Activated naive CD4-positive, alpha-beta T cell treated with anti-CD3 and anti-CD28 coated beads, Interleukin-2, amount 10 ng/mL, durations not matched to agents 7 days and 5 days (primary cell): ENCODE measurements at regions of chr5 and their contacts with region 1.

Region 1: DNA sequence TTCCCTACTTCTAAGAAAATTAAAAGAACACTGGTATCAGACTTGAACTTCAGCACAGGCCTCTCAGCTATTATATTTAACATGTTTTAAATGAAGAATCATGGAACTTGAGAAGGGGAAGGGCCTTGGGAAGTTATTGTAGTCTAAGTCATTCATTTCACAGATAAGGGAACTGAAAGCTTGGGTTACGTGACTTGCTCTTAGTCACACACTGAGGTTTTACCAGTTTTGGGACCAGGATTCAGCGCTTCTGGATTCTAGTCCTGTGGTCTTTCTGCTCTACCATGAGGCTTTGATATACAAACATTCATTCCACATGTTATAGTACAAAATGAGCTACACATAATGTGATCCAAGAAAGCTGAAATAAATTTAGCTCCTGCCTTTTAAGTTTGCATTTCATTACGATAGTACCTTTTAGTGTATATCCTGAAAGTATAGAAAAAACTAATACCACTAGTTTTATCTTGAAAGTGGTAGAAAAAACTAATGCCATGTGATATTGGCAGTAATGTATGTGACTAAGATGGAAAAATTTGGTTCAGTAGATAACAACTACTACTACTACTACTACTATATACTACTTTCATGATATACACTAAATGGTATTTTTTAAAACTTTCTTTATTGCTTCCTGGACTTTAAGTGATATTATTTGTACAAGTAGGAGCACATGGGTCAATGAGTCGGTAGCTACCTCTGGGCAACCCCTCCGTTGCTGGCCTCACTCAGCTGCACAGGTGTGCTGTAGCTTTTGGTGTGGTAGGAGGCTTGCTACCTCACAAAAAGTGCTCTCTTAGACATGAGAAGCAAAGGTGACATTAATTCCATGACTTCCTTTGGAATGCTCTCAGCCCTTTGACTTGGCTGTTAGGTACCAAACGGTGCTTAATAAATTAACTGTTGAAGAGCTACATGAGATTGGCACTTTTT is 40.7 kb downstream of the F2RL2 start:
- DNase-seq: no peak
- H3K4me3 Mint-ChIP-seq: no peak overlapping the region
- H3K27ac Mint-ChIP-seq: peak overlapping the region; percentile 7
- H3K4me1 Mint-ChIP-seq: peaks cover 14% of the 10 kb centered on the region
- H3K27me3 Mint-ChIP-seq: no peaks in the 10 kb centered on the region

Region 2: DNA sequence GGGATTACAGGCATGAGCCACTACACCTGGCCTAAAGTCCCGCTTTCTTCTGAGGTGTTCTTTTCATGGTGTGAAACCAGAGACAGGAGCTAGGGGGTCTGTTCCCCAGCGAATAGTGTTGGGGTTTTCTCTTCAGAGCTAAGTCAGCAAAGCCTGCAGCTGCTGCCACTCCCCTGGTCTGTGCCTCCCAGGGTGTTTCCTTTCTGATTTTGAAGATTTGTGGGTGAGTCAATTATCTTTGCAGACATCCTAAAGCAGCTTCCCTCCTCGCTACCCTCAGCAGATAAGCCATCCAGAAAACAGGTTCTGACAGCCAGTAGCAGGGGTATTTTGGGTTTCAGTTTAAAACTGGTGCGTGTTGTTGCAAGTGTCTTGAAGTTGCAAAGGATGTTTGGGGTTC is 251.4 kb before region 1 on chr5:
- CTCF ChIA-PET with region 1: interaction called, 11 read pairs
- DNase-seq: peak; percentile 66
- H3K4me3 Mint-ChIP-seq: peak overlapping the region; percentile 18
- H3K27ac Mint-ChIP-seq: peak overlapping the region; percentile 91
- H3K4me1 Mint-ChIP-seq: peaks cover 73% of the 10 kb centered on the region
- H3K27me3 Mint-ChIP-seq: no peaks in the 10 kb centered on the region

Region 3: DNA sequence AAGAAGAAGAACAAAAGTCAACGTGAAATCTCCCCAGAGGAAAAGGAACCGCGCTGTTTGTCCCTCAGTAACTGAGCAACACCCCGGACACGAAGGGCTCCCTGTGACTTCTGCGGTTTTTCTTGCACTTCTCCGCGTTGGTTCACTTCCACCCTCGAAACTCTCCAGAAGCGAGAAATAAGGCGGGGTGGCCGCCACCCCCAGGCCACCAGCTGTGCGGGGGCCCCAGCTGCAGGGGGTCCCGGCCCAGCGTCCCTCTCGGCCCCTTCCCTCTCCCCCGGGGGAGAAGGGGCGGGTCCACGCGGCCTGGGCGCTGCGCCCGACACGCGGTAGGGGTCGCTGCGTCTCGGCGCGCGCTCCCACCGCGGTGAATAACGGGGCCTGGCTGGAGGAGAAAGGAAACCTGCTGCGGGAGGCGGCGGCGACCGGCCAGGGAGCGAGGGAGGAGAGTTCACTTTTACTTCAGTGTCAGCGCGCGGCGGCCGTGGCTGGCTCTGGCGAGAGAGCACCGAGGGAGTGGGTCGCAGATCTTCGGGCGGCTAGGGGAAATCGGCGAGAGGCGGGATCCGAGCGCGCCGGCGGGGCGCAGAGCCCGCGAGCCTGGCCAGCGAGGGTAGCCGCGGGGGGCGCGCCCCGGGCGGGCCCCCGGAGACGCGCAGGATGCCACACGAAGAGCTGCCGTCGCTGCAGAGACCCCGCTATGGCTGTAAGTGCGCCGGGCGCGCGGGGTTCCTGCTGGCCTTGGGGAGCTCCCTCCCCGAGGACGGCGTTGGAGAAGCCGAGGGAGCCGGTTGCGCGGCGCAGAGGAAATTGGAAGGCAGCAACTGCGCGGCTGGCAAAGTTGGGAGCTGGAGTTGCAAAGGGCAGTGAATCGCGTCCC is 179.4 kb before region 1 on chr5 and contains the start of gene IQGAP2:
- CTCF ChIA-PET with region 1: interaction called, 30 read pairs
- DNase-seq: peak; percentile 90
- H3K4me3 Mint-ChIP-seq: peak within 1 kb of the TSS; percentile 88
- H3K27ac Mint-ChIP-seq: peak within 1 kb of the TSS; percentile 100
- H3K4me1 Mint-ChIP-seq: peaks cover 59% of the 10 kb centered on the region
- H3K27me3 Mint-ChIP-seq: peaks cover 13% of the 10 kb centered on the region